ENCODE measurements at regions of chr20 and their contacts with region 1.

Region 1: DNA sequence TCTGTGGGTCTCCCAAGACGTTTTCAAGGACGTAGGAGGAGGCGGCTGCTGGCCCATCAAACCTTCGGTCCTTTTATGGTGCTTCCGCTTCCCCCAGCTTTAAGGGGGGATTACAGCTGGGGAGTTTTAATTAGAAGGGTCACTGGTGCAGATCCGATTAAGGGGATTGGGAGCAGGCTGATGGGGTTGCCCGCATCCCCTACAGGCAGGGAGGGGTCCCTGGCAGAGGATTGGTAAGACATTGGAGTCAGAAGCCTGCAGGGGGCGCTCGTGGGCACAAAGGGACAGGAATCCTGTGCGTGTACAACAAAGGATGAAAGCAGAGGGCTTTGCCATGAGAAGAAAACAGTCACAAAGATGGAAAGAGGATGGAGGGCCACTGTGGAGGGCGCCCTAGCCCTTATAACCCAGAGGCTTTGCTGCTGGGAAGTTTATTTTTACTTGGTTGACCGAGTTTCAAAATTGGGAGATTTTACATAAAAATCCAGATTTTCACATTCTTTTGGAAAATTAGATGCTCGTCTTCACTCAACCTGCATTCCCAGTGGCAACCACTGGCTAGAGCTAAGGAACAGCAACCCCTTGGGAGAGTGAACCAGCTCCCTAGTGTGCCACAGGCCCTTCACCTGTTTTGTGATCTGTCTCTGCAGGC is 97.9 kb downstream of the KCNB1 start:
- DNase-seq: peak; percentile 97
- ATAC-seq: peak; percentile 79
- H3K4me3 Mint-ChIP-seq: no peak overlapping the region
- H3K27ac Mint-ChIP-seq: 0 out of 2 replicates have a peak overlapping the region, but pooled peaks have one; percentile 1
- H3K4me1 Mint-ChIP-seq: peaks cover 29% of the 10 kb centered on the region
- H3K27me3 Mint-ChIP-seq: no peaks in the 10 kb centered on the region
- CTCF ChIP-seq: peak; percentile 91

Region 2: DNA sequence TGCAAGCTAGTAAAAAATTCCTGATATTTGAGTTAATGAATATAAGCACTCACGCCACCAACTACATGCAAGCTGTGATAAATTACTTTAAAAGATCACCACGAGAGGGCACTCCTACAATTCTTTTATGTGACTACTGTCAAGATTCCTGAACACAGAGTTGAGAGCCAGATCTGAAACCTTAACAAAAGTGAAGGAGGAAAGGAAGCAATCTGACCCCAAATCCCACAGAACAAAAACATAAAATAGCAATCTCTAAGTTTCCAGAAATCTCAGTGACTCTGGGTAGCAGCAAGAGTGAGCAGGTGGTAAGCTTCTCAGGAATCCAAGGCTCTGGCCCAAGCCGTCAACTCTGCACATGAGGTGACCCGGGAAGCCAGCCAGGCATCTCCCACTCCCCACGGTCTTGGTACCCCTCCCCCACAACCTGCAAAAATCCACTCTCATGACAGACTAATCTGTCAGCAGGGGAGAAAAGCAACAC is 251.5 kb before region 1 on chr20:
- CTCF ChIA-PET with region 1: no interaction called
- POLR2A ChIA-PET with region 1: no interaction called
- DNase-seq: no peak
- ATAC-seq: peak; percentile 59
- H3K4me3 Mint-ChIP-seq: no peak overlapping the region
- H3K27ac Mint-ChIP-seq: peak overlapping the region; percentile 67; the same call in 1 of the 2 replicates
- H3K4me1 Mint-ChIP-seq: peaks cover 5% of the 10 kb centered on the region
- H3K27me3 Mint-ChIP-seq: no peaks in the 10 kb centered on the region
- CTCF ChIP-seq: 0 out of 2 replicates have a peak, but pooled peaks have one; percentile 33

Region 3: DNA sequence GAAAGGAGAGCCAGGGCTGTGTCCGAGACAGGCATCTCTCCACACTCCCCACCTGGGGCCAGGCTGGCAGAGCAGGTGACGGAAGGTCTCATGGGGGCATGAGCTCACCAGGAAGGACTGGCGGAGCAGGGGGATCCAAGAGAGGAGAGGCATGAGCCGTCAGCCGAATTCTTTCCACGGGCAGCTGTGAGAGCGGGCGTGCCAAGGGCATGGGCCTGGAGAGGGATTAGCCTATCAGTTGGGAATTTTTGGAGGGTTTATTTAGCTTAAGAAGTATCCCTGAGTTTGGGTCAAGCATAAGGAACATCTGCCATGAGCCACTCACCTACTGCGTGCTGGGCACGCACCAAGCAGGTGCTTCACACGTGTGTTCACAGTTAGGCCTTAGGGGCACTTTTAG is 46.5 kb before region 1 on chr20:
- CTCF ChIA-PET with region 1: interaction called, 13 read pairs
- POLR2A ChIA-PET with region 1: no interaction called
- DNase-seq: no peak
- ATAC-seq: no peak
- H3K4me3 Mint-ChIP-seq: no peak overlapping the region
- H3K27ac Mint-ChIP-seq: no peak overlapping the region
- H3K4me1 Mint-ChIP-seq: no peaks in the 10 kb centered on the region
- H3K27me3 Mint-ChIP-seq: 0 out of 2 replicates have a peak, but pooled peaks cover under 1% of the 10 kb centered on the region
- CTCF ChIP-seq: no peak

Region 4: GRCh38 chr20:49397525-49397924 is 13.0 kb after region 1 on chr20:
- CTCF ChIA-PET with region 1: interaction called, 37 read pairs
- POLR2A ChIA-PET with region 1: no interaction called
- DNase-seq: no peak
- ATAC-seq: no peak
- H3K4me3 Mint-ChIP-seq: no peak overlapping the region
- H3K27ac Mint-ChIP-seq: no peak overlapping the region
- H3K4me1 Mint-ChIP-seq: peaks cover 8% of the 10 kb centered on the region; the same call in 1 of the 2 replicates
- H3K27me3 Mint-ChIP-seq: no peaks in the 10 kb centered on the region
- CTCF ChIP-seq: no peak

Region 5: DNA sequence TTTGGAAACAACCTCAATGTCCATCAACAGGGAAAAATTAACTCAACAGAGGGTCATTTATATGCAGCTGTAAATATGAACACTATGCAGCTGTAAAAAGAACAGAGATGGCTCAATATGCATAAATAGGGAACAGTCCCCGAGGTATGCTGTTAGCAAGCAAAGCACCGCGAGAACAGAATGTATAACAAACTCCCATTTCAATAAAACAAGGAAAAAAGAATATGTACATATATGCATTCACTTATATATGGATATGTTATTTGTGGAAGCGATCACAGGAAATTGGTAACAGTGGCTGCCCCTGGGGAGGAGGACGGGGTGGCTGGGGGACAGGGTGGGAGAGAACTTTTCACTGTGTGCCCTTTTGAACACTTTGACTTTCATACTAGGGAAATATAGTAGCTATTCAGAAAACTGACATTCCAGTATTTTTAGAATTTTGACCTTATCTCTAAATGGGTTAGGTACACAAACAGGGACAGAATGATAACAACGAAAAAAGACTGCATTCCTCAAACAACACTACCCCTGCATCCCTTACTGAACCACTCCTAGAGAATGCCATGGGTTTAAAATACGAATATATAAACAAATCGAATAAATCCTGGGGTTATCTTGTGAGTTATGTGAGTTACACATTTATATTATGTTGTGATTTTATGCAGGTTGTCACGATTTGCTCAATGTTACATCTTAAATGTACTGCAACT is 33.4 kb after region 1 on chr20:
- CTCF ChIA-PET with region 1: interaction called, 17 read pairs
- POLR2A ChIA-PET with region 1: no interaction called
- DNase-seq: no peak
- ATAC-seq: no peak
- H3K4me3 Mint-ChIP-seq: no peak overlapping the region
- H3K27ac Mint-ChIP-seq: no peak overlapping the region
- H3K4me1 Mint-ChIP-seq: peaks cover 12% of the 10 kb centered on the region
- H3K27me3 Mint-ChIP-seq: no peaks in the 10 kb centered on the region
- CTCF ChIP-seq: no peak

Region 6: GRCh38 chr20:49446808-49447207 is 62.2 kb after region 1 on chr20:
- CTCF ChIA-PET with region 1: interaction called, 11 read pairs
- POLR2A ChIA-PET with region 1: no interaction called
- DNase-seq: peak; percentile 74
- ATAC-seq: peak; percentile 55
- H3K4me3 Mint-ChIP-seq: no peak overlapping the region
- H3K27ac Mint-ChIP-seq: no peak overlapping the region
- H3K4me1 Mint-ChIP-seq: peaks cover 57% of the 10 kb centered on the region
- H3K27me3 Mint-ChIP-seq: no peaks in the 10 kb centered on the region
- CTCF ChIP-seq: no peak